Panc1 (cell line): ENCODE measurements at regions of chr6 and their contacts with region 1.

Region 1: DNA sequence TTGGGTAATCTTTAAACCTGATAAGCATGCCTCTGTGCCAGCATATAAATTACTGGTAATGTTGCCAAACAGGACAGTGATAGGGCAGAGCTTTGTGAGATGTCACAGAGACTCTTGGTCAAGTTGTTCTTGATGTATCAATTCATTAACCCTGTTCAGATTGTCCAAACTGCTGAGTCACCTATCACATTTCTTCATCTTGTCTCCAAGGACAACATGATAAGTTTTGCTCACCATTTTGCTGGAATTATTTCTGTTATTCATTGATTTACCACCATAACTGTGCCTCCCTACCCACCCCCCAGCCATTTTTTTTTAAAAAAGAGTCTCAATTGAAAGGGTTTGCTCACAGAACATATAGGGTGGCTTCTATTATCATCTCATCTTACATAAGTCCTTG is 19.5 kb upstream of the GMNN start:
- DNase-seq: no peak
- ATAC-seq: no peak
- H3K4me3 ChIP-seq: no peak overlapping the region
- H3K27ac ChIP-seq: no peak overlapping the region
- H3K4me1 ChIP-seq: no peaks in the 10 kb centered on the region
- H3K27me3 ChIP-seq: no peaks in the 10 kb centered on the region
- CTCF ChIP-seq: no peak

Region 2: GRCh38 chr6:24440897-24441598 is 314.2 kb before region 1 on chr6:
- CTCF ChIA-PET with region 1: no interaction called
- POLR2A ChIA-PET with region 1: interaction called, 11 read pairs
- in situ Hi-C with region 1: no loop called
- intact Hi-C with region 1: no loop called
- DNase-seq: no peak
- ATAC-seq: no peak
- H3K4me3 ChIP-seq: no peak overlapping the region
- H3K27ac ChIP-seq: no peak overlapping the region
- H3K4me1 ChIP-seq: no peaks in the 10 kb centered on the region
- H3K27me3 ChIP-seq: no peaks in the 10 kb centered on the region
- CTCF ChIP-seq: no peak

Region 3: GRCh38 chr6:24836109-24836508 is 80.8 kb after region 1 on chr6:
- CTCF ChIA-PET with region 1: no interaction called
- POLR2A ChIA-PET with region 1: no interaction called
- in situ Hi-C with region 1: no loop called
- intact Hi-C with region 1: no loop called
- DNase-seq: no peak
- ATAC-seq: no peak
- H3K4me3 ChIP-seq: no peak overlapping the region
- H3K27ac ChIP-seq: no peak overlapping the region
- H3K4me1 ChIP-seq: no peaks in the 10 kb centered on the region
- H3K27me3 ChIP-seq: peaks cover 6% of the 10 kb centered on the region; the same call in 1 of the 2 replicates
- CTCF ChIP-seq: no peak